Calu3 (cell line): ENCODE measurements at regions of chr14 and their contacts with region 1.

Region 1: GRCh38 chr14:80055667-80056496 is 155.4 kb downstream of the DIO2 start:
- DNase-seq: peak; percentile 34
- H3K4me3 Mint-ChIP-seq: no peak overlapping the region
- H3K27ac Mint-ChIP-seq: no peak overlapping the region
- H3K4me1 Mint-ChIP-seq: peaks cover 9% of the 10 kb centered on the region
- H3K27me3 Mint-ChIP-seq: no peaks in the 10 kb centered on the region
- CTCF ChIP-seq: no peak

Region 2: GRCh38 chr14:80037349-80037748 is 18.5 kb before region 1 on chr14:
- CTCF ChIA-PET with region 1: no interaction called
- intact Hi-C with region 1: no loop called
- DNase-seq: no peak
- H3K4me3 Mint-ChIP-seq: no peak overlapping the region
- H3K27ac Mint-ChIP-seq: no peak overlapping the region
- H3K4me1 Mint-ChIP-seq: no peaks in the 10 kb centered on the region
- H3K27me3 Mint-ChIP-seq: no peaks in the 10 kb centered on the region
- CTCF ChIP-seq: no peak

Region 3: GRCh38 chr14:80356413-80356812 is 300.5 kb after region 1 on chr14:
- CTCF ChIA-PET with region 1: no interaction called
- intact Hi-C with region 1: loop called (anchors 5 kb)
- DNase-seq: peak; percentile 5
- H3K4me3 Mint-ChIP-seq: no peak overlapping the region
- H3K27ac Mint-ChIP-seq: no peak overlapping the region
- H3K4me1 Mint-ChIP-seq: no peaks in the 10 kb centered on the region
- H3K27me3 Mint-ChIP-seq: no peaks in the 10 kb centered on the region
- CTCF ChIP-seq: no peak

Region 4: GRCh38 chr14:80587075-80587724 is 531.3 kb after region 1 on chr14:
- CTCF ChIA-PET with region 1: interaction called, 4 read pairs
- intact Hi-C with region 1: loop called (anchors 5 kb)
- DNase-seq: no peak
- H3K4me3 Mint-ChIP-seq: no peak overlapping the region
- H3K27ac Mint-ChIP-seq: no peak overlapping the region
- H3K4me1 Mint-ChIP-seq: peaks cover 30% of the 10 kb centered on the region
- H3K27me3 Mint-ChIP-seq: no peaks in the 10 kb centered on the region
- CTCF ChIP-seq: peak; percentile 15

Region 5: GRCh38 chr14:80850197-80850814 is 794.4 kb after region 1 on chr14:
- CTCF ChIA-PET with region 1: interaction called, 7 read pairs
- intact Hi-C with region 1: loop called (anchors 1 kb)
- DNase-seq: no peak
- H3K4me3 Mint-ChIP-seq: no peak overlapping the region
- H3K27ac Mint-ChIP-seq: no peak overlapping the region
- H3K4me1 Mint-ChIP-seq: no peaks in the 10 kb centered on the region
- H3K27me3 Mint-ChIP-seq: no peaks in the 10 kb centered on the region
- CTCF ChIP-seq: peak; percentile 39

Region 6: GRCh38 chr14:80987235-80988032 is 931.6 kb after region 1 on chr14:
- CTCF ChIA-PET with region 1: interaction called, 13 read pairs
- intact Hi-C with region 1: loop called (anchors 1 kb)
- DNase-seq: peak; percentile 66
- H3K4me3 Mint-ChIP-seq: no peak overlapping the region
- H3K27ac Mint-ChIP-seq: no peak overlapping the region
- H3K4me1 Mint-ChIP-seq: no peaks in the 10 kb centered on the region
- H3K27me3 Mint-ChIP-seq: peaks cover under 1% of the 10 kb centered on the region
- CTCF ChIP-seq: peak; percentile 62

Region 7: GRCh38 chr14:81164167-81164774 is 1108.4 kb after region 1 on chr14:
- CTCF ChIA-PET with region 1: no interaction called
- intact Hi-C with region 1: loop called (anchors 10 kb)
- DNase-seq: peak; percentile 74
- H3K4me3 Mint-ChIP-seq: no peak overlapping the region
- H3K27ac Mint-ChIP-seq: no peak overlapping the region
- H3K4me1 Mint-ChIP-seq: peaks cover 16% of the 10 kb centered on the region
- H3K27me3 Mint-ChIP-seq: no peaks in the 10 kb centered on the region
- CTCF ChIP-seq: peak; percentile 60

Region 8: GRCh38 chr14:81535396-81536164 is 1479.7 kb after region 1 on chr14:
- CTCF ChIA-PET with region 1: no interaction called
- intact Hi-C with region 1: loop called (anchors 5 kb)
- DNase-seq: no peak
- H3K4me3 Mint-ChIP-seq: no peak overlapping the region
- H3K27ac Mint-ChIP-seq: no peak overlapping the region
- H3K4me1 Mint-ChIP-seq: peaks cover 27% of the 10 kb centered on the region
- H3K27me3 Mint-ChIP-seq: peaks cover 17% of the 10 kb centered on the region
- CTCF ChIP-seq: no peak